PC-3 (cell line): ENCODE measurements at regions of chr7 and their contacts with region 1.

Region 1: GRCh38 chr7:104983578-104984539 is 30.1 kb upstream of the KMT2E start:
- DNase-seq: peak; percentile 84
- ATAC-seq: peak; percentile 94
- H3K4me3 ChIP-seq: peak overlapping the region; percentile 81
- H3K27ac ChIP-seq: peak overlapping the region; percentile 93
- H3K4me1 ChIP-seq: peaks cover 63% of the 10 kb centered on the region
- H3K27me3 ChIP-seq: no peaks in the 10 kb centered on the region
- CTCF ChIP-seq: peak; percentile 41

Region 2: GRCh38 chr7:104795616-104796398 is 188.1 kb before region 1 on chr7:
- CTCF ChIA-PET with region 1: no interaction called
- POLR2A ChIA-PET with region 1: no interaction called
- intact Hi-C with region 1: no loop called
- DNase-seq: peak; percentile 3
- ATAC-seq: no peak
- H3K4me3 ChIP-seq: no peak overlapping the region
- H3K27ac ChIP-seq: no peak overlapping the region
- H3K4me1 ChIP-seq: peaks cover 9% of the 10 kb centered on the region
- H3K27me3 ChIP-seq: peaks cover 22% of the 10 kb centered on the region
- CTCF ChIP-seq: no peak

Region 3: GRCh38 chr7:104971290-104972071 is 12.4 kb before region 1 on chr7:
- CTCF ChIA-PET with region 1: no interaction called
- POLR2A ChIA-PET with region 1: no interaction called
- intact Hi-C with region 1: loop called (anchors 1 kb)
- DNase-seq: peak; percentile 47
- ATAC-seq: peak; percentile 87
- H3K4me3 ChIP-seq: no peak overlapping the region
- H3K27ac ChIP-seq: peak overlapping the region; percentile 64
- H3K4me1 ChIP-seq: no peaks in the 10 kb centered on the region
- H3K27me3 ChIP-seq: no peaks in the 10 kb centered on the region
- CTCF ChIP-seq: no peak

Region 4: DNA sequence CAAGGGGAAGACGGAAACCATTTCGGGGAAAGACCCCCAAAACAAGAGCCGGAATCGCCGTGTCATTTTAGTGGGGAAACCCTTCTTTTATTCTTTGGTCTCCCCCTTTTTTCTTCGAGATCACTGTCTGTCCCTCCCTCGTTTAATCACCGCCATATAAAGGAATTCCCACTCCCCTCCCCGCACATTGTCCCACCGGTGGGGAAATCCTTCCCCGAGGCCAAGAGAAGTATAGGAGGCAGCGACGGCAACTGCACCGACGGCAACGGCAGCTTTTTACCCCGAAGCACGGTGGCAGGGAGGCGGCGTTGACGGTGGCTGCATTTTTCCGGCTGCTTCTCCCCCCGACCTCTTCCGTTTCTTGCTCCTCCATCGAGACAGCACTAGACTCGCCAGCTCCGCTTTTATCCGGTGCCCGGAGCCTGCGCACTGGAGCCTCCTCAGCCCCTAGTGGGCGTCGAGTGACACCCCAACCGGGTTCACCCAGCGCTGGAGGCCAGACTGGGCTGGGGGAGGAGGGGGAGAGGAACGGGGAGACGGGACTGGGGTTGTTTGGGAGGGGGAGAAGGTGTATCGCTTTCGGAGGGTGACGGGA is 29.5 kb after region 1 on chr7:
- CTCF ChIA-PET with region 1: interaction called, 12 read pairs
- POLR2A ChIA-PET with region 1: interaction called, 13 read pairs
- intact Hi-C with region 1: loop called (anchors 2 kb)
- DNase-seq: peak; percentile 89
- ATAC-seq: peak; percentile 69
- H3K4me3 ChIP-seq: peak overlapping the region; percentile 78
- H3K27ac ChIP-seq: peak overlapping the region; percentile 95
- H3K4me1 ChIP-seq: peaks cover 31% of the 10 kb centered on the region
- H3K27me3 ChIP-seq: no peaks in the 10 kb centered on the region
- CTCF ChIP-seq: peak; percentile 40; the same call in 1 of the 2 replicates

Region 5: DNA sequence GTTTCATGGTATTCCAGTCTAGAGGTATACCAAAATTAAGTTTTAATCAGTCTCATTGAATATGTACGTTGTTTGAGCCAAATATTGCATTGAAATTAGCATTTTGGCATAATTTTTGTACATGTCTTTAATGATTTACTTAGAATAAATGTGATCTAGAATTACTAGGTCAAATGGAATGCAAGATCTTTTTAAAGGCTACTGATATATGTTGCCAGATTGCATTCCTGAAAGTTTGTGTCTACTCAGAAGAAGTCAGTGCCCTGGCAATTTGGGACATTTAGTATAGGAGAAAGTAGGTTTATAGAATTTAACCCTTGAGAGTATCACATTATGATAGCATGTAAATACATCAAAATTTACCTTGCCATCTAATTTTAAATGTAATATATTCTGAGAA is 62.6 kb after region 1 on chr7:
- CTCF ChIA-PET with region 1: no interaction called
- POLR2A ChIA-PET with region 1: interaction called, 4 read pairs
- intact Hi-C with region 1: loop called (anchors 1 kb)
- DNase-seq: peak; percentile 61
- ATAC-seq: peak; percentile 77
- H3K4me3 ChIP-seq: no peak overlapping the region
- H3K27ac ChIP-seq: no peak overlapping the region
- H3K4me1 ChIP-seq: peaks cover 13% of the 10 kb centered on the region; the same call in 1 of the 2 replicates
- H3K27me3 ChIP-seq: no peaks in the 10 kb centered on the region
- CTCF ChIP-seq: no peak

Region 6: GRCh38 chr7:105336009-105336408 is 352.1 kb after region 1 on chr7:
- CTCF ChIA-PET with region 1: no interaction called
- POLR2A ChIA-PET with region 1: no interaction called
- intact Hi-C with region 1: loop called (anchors 5 kb)
- DNase-seq: peak; percentile 47
- ATAC-seq: no peak
- H3K4me3 ChIP-seq: no peak overlapping the region
- H3K27ac ChIP-seq: no peak overlapping the region
- H3K4me1 ChIP-seq: peaks cover 7% of the 10 kb centered on the region; the same call in 1 of the 2 replicates
- H3K27me3 ChIP-seq: no peaks in the 10 kb centered on the region
- CTCF ChIP-seq: peak; percentile 57; the same call in 1 of the 2 replicates